Activated CD8-positive, alpha-beta T cell treated with anti-CD3 and anti-CD28 coated beads for 36 hours (primary cell): ENCODE measurements at regions of chr1 and their contacts with region 1.

Region 1: GRCh38 chr1:6438047-6438525 is 13.5 kb downstream of the ESPN start:
- DNase-seq: peak; percentile 82
- ATAC-seq: peak; percentile 75
- H3K4me3 Mint-ChIP-seq: no peak overlapping the region
- H3K27ac Mint-ChIP-seq: no peak overlapping the region
- H3K4me1 Mint-ChIP-seq: peaks cover 4% of the 10 kb centered on the region
- H3K27me3 Mint-ChIP-seq: peaks cover 22% of the 10 kb centered on the region
- CTCF ChIP-seq: peak; percentile 93

Region 2: GRCh38 chr1:6343506-6344405 is 94.3 kb before region 1 on chr1:
- CTCF ChIA-PET with region 1: interaction called, 11 read pairs
- POLR2A ChIA-PET with region 1: no interaction called
- intact Hi-C with region 1: no loop called
- DNase-seq: peak; percentile 78
- ATAC-seq: peak; percentile 89
- H3K4me3 Mint-ChIP-seq: no peak overlapping the region
- H3K27ac Mint-ChIP-seq: no peak overlapping the region
- H3K4me1 Mint-ChIP-seq: peaks cover 10% of the 10 kb centered on the region
- H3K27me3 Mint-ChIP-seq: no peaks in the 10 kb centered on the region
- CTCF ChIP-seq: peak; percentile 93

Region 3: GRCh38 chr1:6414443-6414844 is 23.6 kb before region 1 on chr1:
- CTCF ChIA-PET with region 1: interaction called, 21 read pairs
- POLR2A ChIA-PET with region 1: no interaction called
- intact Hi-C with region 1: no loop called
- DNase-seq: peak; percentile 79
- ATAC-seq: peak; percentile 94
- H3K4me3 Mint-ChIP-seq: no peak overlapping the region
- H3K27ac Mint-ChIP-seq: no peak overlapping the region
- H3K4me1 Mint-ChIP-seq: peaks cover 11% of the 10 kb centered on the region
- H3K27me3 Mint-ChIP-seq: peaks cover 54% of the 10 kb centered on the region
- CTCF ChIP-seq: peak; percentile 62

Region 4: GRCh38 chr1:6454856-6455751 is 17.0 kb after region 1 on chr1:
- CTCF ChIA-PET with region 1: interaction called, 31 read pairs
- POLR2A ChIA-PET with region 1: interaction called, 4 read pairs
- intact Hi-C with region 1: no loop called
- DNase-seq: peak; percentile 39
- ATAC-seq: peak; percentile 50
- H3K4me3 Mint-ChIP-seq: no peak overlapping the region
- H3K27ac Mint-ChIP-seq: no peak overlapping the region
- H3K4me1 Mint-ChIP-seq: peaks cover 18% of the 10 kb centered on the region
- H3K27me3 Mint-ChIP-seq: peaks cover 46% of the 10 kb centered on the region
- CTCF ChIP-seq: peak; percentile 41

Region 5: GRCh38 chr1:6489799-6490180 is 51.7 kb after region 1 on chr1:
- CTCF ChIA-PET with region 1: interaction called, 10 read pairs
- POLR2A ChIA-PET with region 1: interaction called, 3 read pairs
- intact Hi-C with region 1: no loop called
- DNase-seq: peak; percentile 82
- ATAC-seq: peak; percentile 62
- H3K4me3 Mint-ChIP-seq: peak overlapping the region; percentile 77
- H3K27ac Mint-ChIP-seq: peak overlapping the region; percentile 57
- H3K4me1 Mint-ChIP-seq: peaks cover 25% of the 10 kb centered on the region
- H3K27me3 Mint-ChIP-seq: peaks cover 13% of the 10 kb centered on the region
- CTCF ChIP-seq: peak; percentile 100